Mammary epithelial cell (primary cell): ENCODE measurements at regions of chr9 and their contacts with region 1.

Region 1: GRCh38 chr9:131046581-131047202 is 37.7 kb downstream of the LAMC3 start:
- DNase-seq: peak; percentile 39
- H3K4me3 ChIP-seq: no peak overlapping the region
- H3K27ac ChIP-seq: no peak overlapping the region
- H3K4me1 ChIP-seq: no peaks in the 10 kb centered on the region
- H3K27me3 ChIP-seq: peaks cover 2% of the 10 kb centered on the region
- CTCF ChIP-seq: peak; percentile 67 to 96

Region 2: GRCh38 chr9:130712564-130713285 is 334.0 kb before region 1 on chr9:
- CTCF ChIA-PET with region 1: no interaction called
- dilution Hi-C with region 1: no loop called
- in situ Hi-C with region 1: no loop called
- intact Hi-C with region 1: loop called (anchors 2 kb)
- DNase-seq: peak; percentile 99
- H3K4me3 ChIP-seq: peak overlapping the region; percentile 85 to 96 (median 93)
- H3K27ac ChIP-seq: peak overlapping the region; percentile 85
- H3K4me1 ChIP-seq: peaks cover 23% of the 10 kb centered on the region
- H3K27me3 ChIP-seq: no peaks in the 10 kb centered on the region
- CTCF ChIP-seq: no peak

Region 3: GRCh38 chr9:130884980-130885696 is 161.6 kb before region 1 on chr9:
- CTCF ChIA-PET with region 1: no interaction called
- dilution Hi-C with region 1: no loop called
- in situ Hi-C with region 1: no loop called
- intact Hi-C with region 1: loop called (anchors 5 kb)
- DNase-seq: no peak
- H3K4me3 ChIP-seq: no peak overlapping the region
- H3K27ac ChIP-seq: peak overlapping the region; percentile 25
- H3K4me1 ChIP-seq: peaks cover 17% of the 10 kb centered on the region
- H3K27me3 ChIP-seq: no peaks in the 10 kb centered on the region
- CTCF ChIP-seq: no peak

Region 4: GRCh38 chr9:130997925-130998596 is 48.6 kb before region 1 on chr9:
- CTCF ChIA-PET with region 1: no interaction called
- dilution Hi-C with region 1: no loop called
- in situ Hi-C with region 1: no loop called
- intact Hi-C with region 1: loop called (anchors 2 kb)
- DNase-seq: peak; percentile 48
- H3K4me3 ChIP-seq: no peak overlapping the region
- H3K27ac ChIP-seq: no peak overlapping the region
- H3K4me1 ChIP-seq: peaks cover 13% of the 10 kb centered on the region
- H3K27me3 ChIP-seq: no peaks in the 10 kb centered on the region
- CTCF ChIP-seq: peak; percentile 78 to 86

Region 5: GRCh38 chr9:131082774-131083512 is 36.3 kb after region 1 on chr9:
- CTCF ChIA-PET with region 1: no interaction called
- dilution Hi-C with region 1: no loop called
- in situ Hi-C with region 1: no loop called
- intact Hi-C with region 1: no loop called
- DNase-seq: no peak
- H3K4me3 ChIP-seq: no peak overlapping the region
- H3K27ac ChIP-seq: no peak overlapping the region
- H3K4me1 ChIP-seq: peaks cover 4% of the 10 kb centered on the region
- H3K27me3 ChIP-seq: peaks cover 3% of the 10 kb centered on the region
- CTCF ChIP-seq: no peak

Region 6: GRCh38 chr9:131096269-131097125 is 49.8 kb after region 1 on chr9 and contains the start of gene AIF1L:
- CTCF ChIA-PET with region 1: no interaction called
- dilution Hi-C with region 1: loop called (anchors 5 kb)
- in situ Hi-C with region 1: no loop called
- intact Hi-C with region 1: no loop called
- DNase-seq: peak; percentile 20
- H3K4me3 ChIP-seq: peak within 1 kb of the TSS; percentile 12 to 56 (median 46)
- H3K27ac ChIP-seq: no peak within 1 kb of the TSS
- H3K4me1 ChIP-seq: peaks cover 9% of the 10 kb centered on the region
- H3K27me3 ChIP-seq: peaks cover 2% of the 10 kb centered on the region
- CTCF ChIP-seq: no peak
- total RNA-seq, gene AIF1L: 5.2 to 10.7 TPM

Region 7: GRCh38 chr9:131334629-131335367 is 288.1 kb after region 1 on chr9:
- CTCF ChIA-PET with region 1: no interaction called
- dilution Hi-C with region 1: no loop called
- in situ Hi-C with region 1: loop called (anchors 10 to 25 kb)
- intact Hi-C with region 1: no loop called
- DNase-seq: no peak
- H3K4me3 ChIP-seq: no peak overlapping the region
- H3K27ac ChIP-seq: no peak overlapping the region
- H3K4me1 ChIP-seq: no peaks in the 10 kb centered on the region
- H3K27me3 ChIP-seq: no peaks in the 10 kb centered on the region
- CTCF ChIP-seq: no peak